Cardiac septum (tissue), 1 donor: ENCODE measurements at regions of chr2 and their contacts with region 1.

Region 1: DNA sequence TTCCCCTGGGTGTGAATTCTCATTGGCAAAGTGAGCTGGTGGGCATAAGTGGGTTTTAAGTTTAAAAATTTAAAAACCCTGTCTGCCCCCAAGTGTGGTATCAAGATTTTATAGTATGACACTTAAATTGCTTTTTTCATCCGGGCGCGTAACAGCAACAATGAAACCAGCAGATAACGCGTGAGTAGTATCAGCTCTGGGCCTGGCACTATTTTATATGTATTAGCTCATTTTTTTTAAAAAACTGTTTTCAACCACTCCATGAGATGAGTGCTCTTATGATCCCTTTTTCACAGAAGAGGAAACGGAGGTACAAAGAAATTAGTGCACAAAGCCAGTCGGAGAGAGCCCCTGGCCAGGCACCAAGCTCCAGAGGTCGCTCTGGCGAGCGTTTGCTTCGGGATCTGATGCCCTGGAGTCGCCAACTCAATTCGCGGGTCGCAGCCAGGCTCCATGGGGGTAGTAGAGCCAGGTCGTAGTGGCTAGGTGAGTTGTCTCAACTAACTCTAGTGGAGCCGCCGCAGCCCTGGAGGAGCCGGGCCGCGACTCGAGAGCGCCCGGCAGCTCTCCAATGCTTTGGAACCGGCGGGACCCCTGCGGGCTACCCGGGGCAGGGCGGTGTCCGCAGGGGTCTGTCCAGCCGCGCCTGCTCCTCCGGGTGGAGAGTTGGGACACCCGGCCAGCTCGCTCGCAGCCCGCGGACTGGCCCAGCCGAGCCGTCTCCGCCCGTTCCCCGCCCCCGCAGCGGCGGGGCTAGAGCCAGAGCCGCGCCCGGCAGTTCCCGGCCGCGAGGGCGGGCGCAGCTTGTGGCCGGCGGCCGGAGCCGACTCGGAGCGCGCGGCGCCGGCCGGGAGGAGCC is at the start of gene IL1R1:
- DNase-seq: peak; percentile 93
- total RNA-seq, gene IL1R1: 27.7 TPM

Region 2: GRCh38 chr2:102063941-102064678 is 78.1 kb before region 1 on chr2:
- intact Hi-C with region 1: loop called (anchors 5 kb)
- DNase-seq: peak; percentile 92